Common myeloid progenitor, CD34-positive (primary cell): ENCODE measurements at regions of chr2 and their contacts with region 1.

Region 1: DNA sequence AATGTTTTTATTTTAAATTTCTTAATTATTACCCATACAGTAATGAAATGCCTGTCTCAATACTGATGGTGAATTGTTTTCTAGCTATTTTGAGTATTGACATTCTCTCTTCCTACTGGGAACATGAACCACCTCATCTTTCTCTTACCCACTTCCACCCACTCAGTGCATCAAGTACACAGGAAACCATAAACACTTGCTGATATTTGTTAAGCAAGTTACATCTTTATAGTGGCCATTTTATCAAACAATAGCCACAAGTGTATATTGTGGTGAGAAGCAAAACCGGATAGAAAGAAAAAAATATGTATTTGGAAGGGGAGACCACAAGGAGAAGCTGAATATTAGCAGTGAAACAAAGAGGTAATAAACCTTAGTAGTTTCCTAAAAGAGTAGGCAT is 368.1 kb upstream of the HNRNPA3 start:
- DNase-seq: no peak
- H3K4me3 ChIP-seq: no peak overlapping the region
- H3K27ac ChIP-seq: no peak overlapping the region
- H3K4me1 ChIP-seq: no peaks in the 10 kb centered on the region
- H3K27me3 ChIP-seq: no peaks in the 10 kb centered on the region

Region 2: GRCh38 chr2:176854878-176855277 is 10.4 kb after region 1 on chr2:
- CTCF ChIA-PET with region 1: interaction called, 10 read pairs
- POLR2A ChIA-PET with region 1: no interaction called
- DNase-seq: no peak
- H3K4me3 ChIP-seq: no peak overlapping the region
- H3K27ac ChIP-seq: no peak overlapping the region
- H3K4me1 ChIP-seq: peaks cover 0 to 13% (median 6%) of the 10 kb centered on the region in 4 experiments
- H3K27me3 ChIP-seq: no peaks in the 10 kb centered on the region

Region 3: GRCh38 chr2:177242116-177242987 is 397.9 kb after region 1 on chr2:
- CTCF ChIA-PET with region 1: no interaction called
- POLR2A ChIA-PET with region 1: no interaction called
- DNase-seq: peak in 2 of 3 donors; percentile 71 to 83
- H3K4me3 ChIP-seq: peak overlapping the region in 2 of 7 experiments; percentile 48
- H3K27ac ChIP-seq: peak overlapping the region; percentile 56 to 70
- H3K4me1 ChIP-seq: peaks cover 28 to 56% (median 47%) of the 10 kb centered on the region in 4 experiments
- H3K27me3 ChIP-seq: no peaks in the 10 kb centered on the region